Esophagus muscularis mucosa (tissue), 4 donors: ENCODE measurements at regions of chr4 and their contacts with region 1.

Region 1: DNA sequence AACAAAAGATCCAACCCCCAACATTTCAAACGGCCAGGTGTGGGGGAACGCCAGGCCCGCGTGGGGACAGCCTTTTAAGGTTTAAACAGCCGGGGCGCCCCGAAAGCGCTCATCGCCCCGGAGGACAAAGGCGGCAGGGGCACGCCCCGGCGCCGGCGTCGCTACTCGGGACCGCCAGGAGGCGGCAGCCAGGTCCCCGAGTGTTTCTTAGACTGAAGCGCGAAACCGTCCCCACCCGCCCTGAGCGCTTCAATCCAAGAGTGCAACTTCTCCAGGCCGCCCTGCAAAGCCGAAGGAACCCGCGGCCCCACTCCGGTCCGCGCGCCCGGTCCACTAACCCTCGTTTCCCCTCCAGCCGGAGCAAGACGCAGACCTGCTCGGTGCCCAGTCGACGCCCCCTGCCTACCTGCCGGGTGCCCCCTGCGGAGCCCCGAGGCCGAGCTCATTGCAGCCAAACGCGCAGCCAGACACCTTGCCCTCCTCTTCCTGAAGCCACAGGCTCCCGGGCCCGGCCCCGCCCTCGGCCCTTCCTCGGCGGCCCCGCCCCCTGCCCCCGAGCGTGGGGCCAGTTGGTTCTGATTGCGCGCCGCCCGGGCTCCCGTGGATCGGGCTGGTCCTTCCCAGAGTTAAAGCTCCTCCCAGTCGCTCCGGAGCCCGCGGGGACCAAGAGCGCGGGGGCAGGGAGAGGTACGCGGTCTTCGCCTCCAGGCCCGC is at the start of gene CASP6:
- DNase-seq: peak; percentile 94
- H3K4me3 ChIP-seq: peak within 1 kb of the TSS; percentile 61 to 86 (median 78)
- H3K27ac ChIP-seq: peak within 1 kb of the TSS; percentile 75 to 91 (median 86)
- H3K4me1 ChIP-seq: peaks cover 11 to 28% (median 23%) of the 10 kb centered on the region in 4 donors
- H3K27me3 ChIP-seq: no peaks in the 10 kb centered on the region
- CTCF ChIP-seq: peak; percentile 54 to 81 (median 63)
- EP300 ChIP-seq: no peak
- POLR2A ChIP-seq: no peak
- total RNA-seq, gene CASP6: 16.3 to 26.8 (median 19.2) TPM

Region 2: GRCh38 chr4:109424093-109424841 is 278.8 kb before region 1 on chr4:
- intact Hi-C with region 1: loop called (anchors 10 kb)
- DNase-seq: no peak
- H3K4me3 ChIP-seq: no peak overlapping the region
- H3K27ac ChIP-seq: no peak overlapping the region
- H3K4me1 ChIP-seq: peaks cover 0 to 6% (median 5%) of the 10 kb centered on the region in 4 donors
- H3K27me3 ChIP-seq: no peaks in the 10 kb centered on the region
- CTCF ChIP-seq: no peak
- EP300 ChIP-seq: no peak
- POLR2A ChIP-seq: no peak

Region 3: GRCh38 chr4:109548655-109549054 is 154.5 kb before region 1 on chr4:
- intact Hi-C with region 1: no loop called
- DNase-seq: no peak
- H3K4me3 ChIP-seq: no peak overlapping the region
- H3K27ac ChIP-seq: peak overlapping the region in 1 of 4 donors; percentile 1
- H3K4me1 ChIP-seq: no peaks in the 10 kb centered on the region
- H3K27me3 ChIP-seq: no peaks in the 10 kb centered on the region
- CTCF ChIP-seq: no peak
- EP300 ChIP-seq: no peak
- POLR2A ChIP-seq: no peak

Region 4: GRCh38 chr4:109729718-109730618 is 26.9 kb after region 1 on chr4 and contains the start of gene PLA2G12A:
- intact Hi-C with region 1: loop called (anchors 2 kb)
- DNase-seq: no peak
- H3K4me3 ChIP-seq: peak within 1 kb of the TSS; percentile 78 to 93 (median 88)
- H3K27ac ChIP-seq: peak within 1 kb of the TSS; percentile 76 to 80 (median 78)
- H3K4me1 ChIP-seq: peaks cover 13 to 20% (median 15%) of the 10 kb centered on the region in 4 donors
- H3K27me3 ChIP-seq: no peaks in the 10 kb centered on the region
- CTCF ChIP-seq: no peak
- EP300 ChIP-seq: no peak
- POLR2A ChIP-seq: no peak
- total RNA-seq, gene PLA2G12A: 18.8 to 24.5 (median 23.4) TPM

Region 5: DNA sequence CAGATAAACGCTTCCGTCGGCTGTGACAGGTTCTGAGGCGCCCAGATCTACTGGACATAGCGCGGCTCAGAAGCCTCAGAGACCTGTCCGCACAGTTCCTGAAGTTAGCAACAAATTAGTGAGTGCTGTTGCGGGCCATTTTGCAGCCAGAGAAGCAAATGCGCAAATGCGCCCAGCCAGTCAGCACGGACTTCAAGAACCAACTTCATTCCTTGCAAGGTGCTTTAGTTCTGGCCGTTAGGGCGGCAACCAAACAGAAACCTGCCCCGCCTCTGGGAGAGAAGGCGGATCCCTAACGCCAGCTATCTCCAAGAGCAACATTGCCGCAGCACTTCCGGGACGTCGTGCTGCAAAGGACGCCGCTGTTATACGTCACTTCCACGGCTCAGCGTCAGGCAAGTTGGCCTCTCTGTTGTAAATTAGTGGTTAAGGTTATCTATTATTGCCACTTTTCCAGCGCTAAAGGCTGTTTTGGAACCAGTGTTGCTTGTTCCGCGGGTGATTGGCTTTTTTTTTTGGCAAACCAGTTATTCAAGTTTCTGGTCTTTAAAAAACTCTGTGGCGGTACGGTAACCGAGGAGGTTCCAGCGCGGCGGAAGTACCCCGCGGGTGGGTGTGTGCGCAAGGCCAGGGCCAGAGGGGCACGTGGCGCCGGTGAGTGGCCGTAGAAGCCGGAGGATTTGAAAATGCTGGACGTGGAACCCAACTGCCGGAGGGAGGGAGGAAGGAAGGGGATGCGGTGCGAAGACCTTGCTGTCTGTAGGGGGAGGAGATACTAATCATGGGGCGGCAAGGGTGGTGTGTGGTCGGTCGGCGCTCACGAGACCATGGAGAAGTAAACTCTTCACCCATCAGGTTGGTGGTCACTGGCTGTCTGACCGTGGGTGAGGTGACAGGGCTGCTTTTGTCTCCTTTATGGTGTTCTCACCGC is 112.3 kb after region 1 on chr4 and contains the start of gene GAR1:
- intact Hi-C with region 1: loop called (anchors 5 kb)
- DNase-seq: peak; percentile 98
- H3K4me3 ChIP-seq: peak within 1 kb of the TSS; percentile 73 to 89 (median 83)
- H3K27ac ChIP-seq: peak within 1 kb of the TSS; percentile 82 to 90 (median 85)
- H3K4me1 ChIP-seq: peaks cover 7 to 25% (median 17%) of the 10 kb centered on the region in 4 donors
- H3K27me3 ChIP-seq: no peaks in the 10 kb centered on the region
- CTCF ChIP-seq: no peak
- EP300 ChIP-seq: no peak
- POLR2A ChIP-seq: no peak
- total RNA-seq, gene GAR1: 6.2 to 9.1 (median 7.7) TPM